ENCODE measurements at regions of chr18 and their contacts with region 1.

Region 1: DNA sequence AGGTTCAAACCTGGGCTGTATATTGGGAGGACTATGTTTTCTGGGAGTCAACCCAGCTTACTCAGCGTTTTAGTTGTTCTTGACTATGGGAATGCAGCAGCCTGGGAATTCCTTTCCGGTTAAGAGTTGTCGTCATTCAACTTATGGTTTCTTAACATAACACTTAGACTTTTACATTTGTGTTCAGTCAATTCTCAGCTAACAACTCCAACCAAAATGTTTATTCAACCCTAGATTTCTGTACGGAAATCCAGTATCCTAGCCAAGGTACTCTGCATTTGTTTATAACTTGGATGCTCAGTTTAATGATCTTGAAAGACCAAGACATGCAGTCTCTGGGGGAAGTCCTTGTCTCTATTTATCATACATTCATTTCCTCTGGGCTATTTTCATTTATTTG is 960.9 kb downstream of the CBLN2 start:
- DNase-seq: no peak
- H3K4me3 ChIP-seq: no peak overlapping the region
- H3K27ac ChIP-seq: no peak overlapping the region
- H3K4me1 ChIP-seq: no peaks in the 10 kb centered on the region
- H3K27me3 ChIP-seq: no peaks in the 10 kb centered on the region
- CTCF ChIP-seq: no peak
- POLR2A ChIP-seq: no peak

Region 2: DNA sequence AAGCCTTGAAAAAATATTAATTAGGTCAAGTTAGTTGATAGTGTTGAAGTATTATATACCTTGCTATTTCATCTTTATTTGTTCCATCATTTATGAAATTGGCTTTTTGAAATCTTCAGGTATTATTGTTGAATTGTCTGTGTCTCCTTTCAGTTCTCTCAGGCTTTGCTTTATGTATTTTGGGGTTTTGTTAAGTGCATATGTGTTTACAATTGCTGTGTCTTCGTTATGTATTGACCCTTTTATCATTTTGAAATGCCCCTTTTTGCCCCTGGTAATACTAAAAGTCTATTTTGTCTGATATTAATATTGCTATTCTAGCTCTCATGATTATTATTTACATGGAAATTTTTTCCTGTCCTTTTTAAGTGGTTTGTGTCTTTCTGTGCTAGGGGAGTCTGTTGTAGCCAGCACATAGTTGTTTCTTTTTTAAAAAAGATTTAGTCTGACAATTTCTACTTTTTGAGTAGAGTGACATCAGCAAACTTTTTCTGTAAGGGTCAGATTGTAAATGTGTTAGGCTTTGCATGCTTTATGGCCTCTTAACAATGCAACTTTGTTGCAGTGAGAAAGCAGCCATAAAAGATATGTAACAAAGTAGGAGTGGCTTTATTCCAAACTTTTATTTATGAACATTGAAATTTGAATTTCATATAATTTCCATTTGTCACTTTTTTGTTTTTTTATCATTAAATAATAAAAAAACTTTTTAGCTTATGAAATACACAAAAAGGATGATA is 1274.6 kb before region 1 on chr18:
- CTCF ChIA-PET with region 1: no interaction called
- POLR2A ChIA-PET with region 1: no interaction called
- dilution Hi-C with region 1: no loop called
- intact Hi-C with region 1: loop called (anchors 5 kb)
- DNase-seq: no peak
- H3K4me3 ChIP-seq: no peak overlapping the region
- H3K27ac ChIP-seq: no peak overlapping the region
- H3K4me1 ChIP-seq: no peaks in the 10 kb centered on the region
- H3K27me3 ChIP-seq: no peaks in the 10 kb centered on the region
- CTCF ChIP-seq: no peak
- POLR2A ChIP-seq: no peak